SK-N-SH (cell line): ENCODE measurements at regions of chr17 and their contacts with region 1.

Region 1: DNA sequence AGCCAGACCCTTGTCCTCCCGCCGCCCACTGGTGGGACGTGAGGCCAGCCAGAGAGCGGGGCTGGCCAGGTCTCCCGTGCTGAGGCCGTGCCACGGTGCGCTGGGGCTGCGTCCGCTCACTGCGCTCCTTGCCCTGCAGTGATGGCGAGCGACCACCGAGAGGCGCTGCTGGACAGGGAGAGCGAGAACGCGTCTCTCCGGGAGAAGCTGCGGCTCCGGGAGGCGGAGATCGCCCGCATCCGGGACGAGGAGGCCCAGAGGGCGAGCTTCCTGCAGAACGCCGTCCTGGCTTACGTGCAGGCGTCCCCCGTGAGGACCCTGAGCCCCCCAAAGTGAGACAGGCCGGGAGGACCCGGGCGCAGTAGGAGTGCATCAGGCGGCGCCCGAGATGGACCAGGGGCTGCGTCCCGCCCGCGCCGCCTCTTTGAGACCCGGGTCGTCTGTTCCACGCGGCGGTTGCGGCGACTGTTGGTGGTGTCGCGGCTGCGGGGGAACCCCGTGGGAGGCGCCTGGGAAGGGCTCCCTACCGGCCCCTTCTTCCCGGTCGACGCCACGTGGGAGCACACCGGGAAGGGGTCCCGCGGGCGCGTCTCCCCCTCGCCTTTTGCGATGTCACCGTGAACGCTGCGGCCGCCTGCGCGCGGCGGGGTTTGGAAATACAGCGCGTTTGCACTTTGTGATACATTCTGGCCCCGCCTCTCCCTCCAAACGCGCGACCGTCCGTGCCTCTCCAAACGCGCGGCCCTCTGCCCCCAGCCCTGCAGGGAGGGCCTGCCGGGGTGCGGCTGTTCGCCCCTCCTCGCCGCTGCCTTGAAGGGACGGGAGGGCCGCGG is 792 bp upstream of the RAC3 start:
- DNase-seq: peak; percentile 96
- H3K4me3 ChIP-seq: peak overlapping the region; percentile 50 to 62
- H3K27ac ChIP-seq: peak overlapping the region in 1 of 2 experiments; percentile 85; a peak in 2 of 4 replicates
- H3K4me1 ChIP-seq: peaks cover 0 to 18% of the 10 kb centered on the region in 2 experiments; a peak in 2 of 4 replicates
- H3K27me3 ChIP-seq: no peaks in the 10 kb centered on the region
- CTCF ChIP-seq: peak; percentile 69
- EP300 ChIP-seq: no peak
- RAD21 ChIP-seq: peak; percentile 96

Region 2: GRCh38 chr17:81898141-81898866 is 132.4 kb before region 1 on chr17:
- CTCF ChIA-PET with region 1: no interaction called
- POLR2A ChIA-PET with region 1: no interaction called
- DNase-seq: no peak
- H3K4me3 ChIP-seq: no peak overlapping the region
- H3K27ac ChIP-seq: peak overlapping the region in 1 of 2 experiments; percentile 66; a peak in 2 of 4 replicates
- H3K4me1 ChIP-seq: peaks cover 3 to 10% of the 10 kb centered on the region in 2 experiments; a peak in 1 of 4 replicates
- H3K27me3 ChIP-seq: no peaks in the 10 kb centered on the region
- CTCF ChIP-seq: no peak
- EP300 ChIP-seq: no peak
- RAD21 ChIP-seq: no peak

Region 3: DNA sequence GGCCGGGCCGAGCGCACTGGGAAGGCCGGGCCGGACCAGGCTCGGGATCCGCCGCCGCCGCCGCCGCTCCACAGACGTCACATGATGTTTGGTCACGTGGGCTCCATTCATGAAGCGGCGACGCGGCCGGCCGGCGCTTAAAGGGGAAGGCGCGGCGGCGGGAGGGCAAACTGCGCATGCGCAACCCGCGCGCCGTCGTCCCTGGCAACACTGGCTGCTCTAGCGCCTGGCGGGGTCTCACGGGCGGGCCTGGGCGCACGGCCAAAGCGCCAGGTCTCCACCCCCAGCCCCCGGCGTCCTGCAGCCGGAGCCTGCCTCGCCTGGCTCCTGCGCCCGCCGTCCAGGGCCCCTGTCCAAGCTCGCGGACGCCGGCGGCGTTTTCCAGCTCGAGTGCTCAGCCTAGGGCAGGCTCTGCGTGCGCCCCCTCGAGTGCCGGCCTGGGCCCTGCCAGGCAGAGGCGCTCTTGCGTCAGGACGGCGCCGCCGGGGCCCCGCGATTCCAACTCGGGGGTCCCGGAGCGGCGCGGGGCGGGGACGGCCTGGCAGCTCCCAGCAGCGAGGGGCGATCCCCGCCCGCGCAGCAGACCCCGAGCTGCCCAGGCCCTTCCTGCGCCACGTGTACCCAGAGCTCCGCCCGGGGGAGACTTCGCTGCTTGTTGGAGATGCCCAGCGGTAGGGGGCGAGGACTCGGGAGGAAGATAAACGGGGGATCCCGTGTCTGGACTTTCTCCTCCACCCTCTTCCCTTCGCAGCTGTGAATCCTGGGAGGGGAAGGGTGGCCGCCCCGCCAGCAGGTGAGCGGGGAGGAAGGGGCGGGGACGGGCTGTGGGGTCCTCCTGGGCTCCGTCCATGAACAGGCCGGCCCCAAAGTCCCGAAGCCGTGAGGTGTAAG is 102.8 kb before region 1 on chr17 and contains the start of gene MAFG:
- CTCF ChIA-PET with region 1: interaction called, 32 read pairs
- POLR2A ChIA-PET with region 1: interaction called, 3 read pairs
- DNase-seq: peak; percentile 100
- H3K4me3 ChIP-seq: peak within 1 kb of the TSS; percentile 92
- H3K27ac ChIP-seq: peak within 1 kb of the TSS; percentile 72 to 85
- H3K4me1 ChIP-seq: peaks cover 20 to 31% of the 10 kb centered on the region in 2 experiments; a peak in 2 of 4 replicates
- H3K27me3 ChIP-seq: no peaks in the 10 kb centered on the region
- CTCF ChIP-seq: peak; percentile 63
- EP300 ChIP-seq: peak in 1 of 2 experiments; percentile 44; a peak in 1 of 4 replicates
- RAD21 ChIP-seq: 0 out of 2 replicates have a peak, but pooled peaks have one; percentile 26
- polyA plus RNA-seq, gene MAFG: 30.3 and 38.7 TPM in 2 replicates

Region 4: GRCh38 chr17:82013341-82013740 is 17.3 kb before region 1 on chr17:
- CTCF ChIA-PET with region 1: interaction called, 103 read pairs
- POLR2A ChIA-PET with region 1: no interaction called
- DNase-seq: peak; percentile 94
- H3K4me3 ChIP-seq: no peak overlapping the region
- H3K27ac ChIP-seq: peak overlapping the region in 1 of 2 experiments; percentile 82; a peak in 2 of 4 replicates
- H3K4me1 ChIP-seq: peaks cover 0 to 24% of the 10 kb centered on the region in 2 experiments; a peak in 1 of 4 replicates
- H3K27me3 ChIP-seq: no peaks in the 10 kb centered on the region
- CTCF ChIP-seq: no peak
- EP300 ChIP-seq: no peak
- RAD21 ChIP-seq: no peak

Region 5: DNA sequence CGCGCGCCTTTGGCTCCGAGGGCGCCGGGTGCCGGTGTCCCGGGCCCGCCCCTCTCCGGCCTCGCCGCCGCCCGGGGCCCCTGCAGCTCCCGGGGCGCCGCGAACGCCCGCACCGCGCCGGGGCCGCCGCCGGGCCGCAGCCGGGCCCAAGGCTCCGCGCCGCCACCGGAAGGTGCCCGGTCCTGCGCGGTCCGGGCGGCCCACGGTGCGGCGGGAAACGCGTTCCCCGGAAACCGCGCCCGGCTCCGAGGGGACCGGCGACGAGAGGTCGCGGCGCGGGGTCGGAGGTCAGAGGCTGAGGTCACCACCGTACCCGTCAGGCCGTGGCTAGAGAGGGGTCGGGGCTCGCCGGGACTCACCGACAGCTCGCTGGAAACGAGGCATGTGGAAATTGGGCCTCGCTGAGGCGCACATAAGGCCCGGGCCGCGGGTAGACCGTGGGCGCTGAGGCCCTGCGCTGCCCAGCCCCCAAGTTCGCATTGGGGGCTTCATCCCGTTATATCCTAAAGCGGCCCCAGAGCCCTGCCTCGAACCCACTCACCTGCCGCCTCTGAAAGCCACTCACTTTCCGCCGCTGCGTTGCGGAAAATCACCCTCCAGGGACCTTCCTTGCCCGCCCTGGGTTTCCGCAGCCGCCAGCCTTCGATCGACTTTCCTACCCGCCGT is 35.1 kb after region 1 on chr17 and contains the start of gene DUS1L:
- CTCF ChIA-PET with region 1: interaction called, 47 read pairs
- POLR2A ChIA-PET with region 1: interaction called, 5 read pairs
- DNase-seq: peak; percentile 98
- H3K4me3 ChIP-seq: peak within 1 kb of the TSS; percentile 81 to 95
- H3K27ac ChIP-seq: peak within 1 kb of the TSS in 1 of 2 experiments; percentile 51; a peak in 1 of 4 replicates
- H3K4me1 ChIP-seq: peaks cover 12 to 21% of the 10 kb centered on the region in 2 experiments; a peak in 2 of 4 replicates
- H3K27me3 ChIP-seq: no peaks in the 10 kb centered on the region
- CTCF ChIP-seq: no peak
- EP300 ChIP-seq: no peak
- RAD21 ChIP-seq: no peak
- polyA plus RNA-seq, gene DUS1L: 144 and 163 TPM in 2 replicates

Region 6: DNA sequence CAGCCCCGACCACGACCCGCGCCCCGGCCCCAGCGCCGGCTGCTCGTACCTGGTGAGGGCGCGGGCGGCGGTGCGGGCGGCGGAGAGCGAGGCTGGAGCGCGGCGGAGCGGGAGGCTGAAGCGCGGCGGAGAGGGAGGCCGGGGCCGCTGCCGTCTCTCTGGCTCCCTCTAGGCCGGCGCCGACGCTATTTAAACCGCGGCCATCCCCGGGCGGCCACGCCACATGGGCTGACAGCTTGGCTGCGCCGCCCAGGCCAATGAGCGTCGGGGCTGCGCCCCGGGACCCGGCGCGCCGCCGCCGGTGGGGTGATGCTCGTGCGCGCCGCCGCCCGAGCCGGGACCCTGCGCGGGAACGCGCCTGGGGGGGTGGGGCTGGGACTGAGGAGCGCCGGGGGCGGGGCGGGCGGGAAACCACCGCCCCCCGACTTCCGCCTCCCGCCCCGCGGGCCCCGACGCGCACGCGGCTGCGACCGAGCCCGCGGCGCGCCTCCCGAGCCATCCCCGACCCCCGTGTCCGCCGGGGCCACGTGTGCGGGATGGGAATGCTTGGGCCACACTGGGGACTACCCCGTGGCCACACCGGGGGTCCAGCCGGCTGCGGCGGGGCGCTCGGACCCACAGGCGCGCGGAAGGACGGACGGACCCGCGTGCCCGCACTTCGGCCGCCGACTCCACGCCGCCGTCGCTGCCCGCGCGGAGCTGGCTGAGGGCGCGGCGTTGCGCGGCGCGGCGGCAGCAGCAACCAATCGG is 67.6 kb after region 1 on chr17 and contains the start of gene FASN:
- CTCF ChIA-PET with region 1: interaction called, 21 read pairs
- POLR2A ChIA-PET with region 1: interaction called, 11 read pairs
- DNase-seq: peak; percentile 100
- H3K4me3 ChIP-seq: peak within 1 kb of the TSS; percentile 86 to 94
- H3K27ac ChIP-seq: peak within 1 kb of the TSS; percentile 79 to 99
- H3K4me1 ChIP-seq: peaks cover 21 to 53% of the 10 kb centered on the region in 2 experiments
- H3K27me3 ChIP-seq: no peaks in the 10 kb centered on the region
- CTCF ChIP-seq: peak; percentile 48
- EP300 ChIP-seq: peak in 1 of 2 experiments; percentile 22; a peak in 1 of 4 replicates
- RAD21 ChIP-seq: peak; percentile 28; the same call in 1 of the 2 replicates
- polyA plus RNA-seq, gene FASN: 28.1 and 55.1 TPM in 2 replicates

Region 7: DNA sequence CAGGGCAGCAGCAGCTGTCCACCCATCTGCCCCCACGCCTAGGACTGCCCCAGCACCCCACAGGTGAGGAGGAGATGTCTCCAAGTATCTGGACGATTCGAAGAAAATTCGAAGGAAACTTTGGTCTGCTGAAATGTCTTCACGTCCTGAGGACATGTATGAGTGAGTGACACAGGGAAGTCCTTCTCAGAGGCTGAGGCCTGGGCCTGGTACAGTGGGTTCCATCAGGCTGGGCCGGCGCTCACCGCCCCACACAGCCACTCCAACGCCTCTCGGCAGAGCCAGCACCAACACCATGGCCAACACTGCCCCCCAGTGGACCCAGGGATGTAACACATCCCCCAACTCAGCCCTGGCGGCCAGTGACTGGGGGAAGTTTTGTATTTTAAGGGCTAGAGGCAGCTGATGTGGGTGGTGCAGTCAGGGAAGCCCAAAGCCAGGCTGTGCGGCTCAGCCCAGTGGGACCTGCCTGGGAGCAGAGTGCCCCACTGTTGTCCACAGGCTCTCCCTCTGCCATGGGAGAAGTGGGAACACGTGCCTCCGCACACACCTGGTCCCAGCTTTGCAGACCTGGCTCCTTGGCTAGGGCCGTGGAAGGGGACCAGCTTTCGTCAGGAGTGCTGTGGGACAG is 123.2 kb after region 1 on chr17:
- CTCF ChIA-PET with region 1: interaction called, 174 read pairs
- POLR2A ChIA-PET with region 1: interaction called, 14 read pairs
- DNase-seq: peak; percentile 97
- H3K4me3 ChIP-seq: no peak overlapping the region; a peak in 1 of 4 replicates
- H3K27ac ChIP-seq: no peak overlapping the region
- H3K4me1 ChIP-seq: no peaks in the 10 kb centered on the region
- H3K27me3 ChIP-seq: no peaks in the 10 kb centered on the region
- CTCF ChIP-seq: peak; percentile 85
- EP300 ChIP-seq: no peak
- RAD21 ChIP-seq: peak; percentile 97

Region 8: GRCh38 chr17:82212331-82213250 is 181.9 kb after region 1 on chr17 and contains the start of gene CCDC57:
- CTCF ChIA-PET with region 1: interaction called, 12 read pairs
- POLR2A ChIA-PET with region 1: no interaction called
- DNase-seq: peak; percentile 99
- H3K4me3 ChIP-seq: peak within 1 kb of the TSS; percentile 76 to 88
- H3K27ac ChIP-seq: peak within 1 kb of the TSS; percentile 83 to 89
- H3K4me1 ChIP-seq: peaks cover 20 to 41% of the 10 kb centered on the region in 2 experiments
- H3K27me3 ChIP-seq: no peaks in the 10 kb centered on the region
- CTCF ChIP-seq: no peak
- EP300 ChIP-seq: peak in 1 of 2 experiments; percentile 13; a peak in 1 of 4 replicates
- RAD21 ChIP-seq: no peak
- polyA plus RNA-seq, gene CCDC57: 68.6 and 82.9 TPM in 2 replicates